OCI-LY7 (cell line): ENCODE measurements at regions of chr3 and their contacts with region 1.

Region 1: GRCh38 chr3:122415720-122416654 is at the start of gene WDR5B:
- DNase-seq: peak; percentile 98
- H3K4me3 ChIP-seq: peak within 1 kb of the TSS; percentile 85
- H3K27ac ChIP-seq: peak within 1 kb of the TSS; percentile 87
- H3K4me1 ChIP-seq: peaks cover 38% of the 10 kb centered on the region
- CTCF ChIP-seq: 0 out of 2 replicates have a peak, but pooled peaks have one; percentile 13
- total RNA-seq, gene WDR5B: 6.9 and 8.3 TPM in 2 replicates

Region 2: GRCh38 chr3:122514123-122515019 is 98.4 kb after region 1 on chr3 and contains the start of gene KPNA1:
- CTCF ChIA-PET with region 1: no interaction called
- POLR2A ChIA-PET with region 1: interaction called, 7 read pairs
- intact Hi-C with region 1: loop called (anchors 5 kb)
- DNase-seq: peak; percentile 93
- H3K4me3 ChIP-seq: peak within 1 kb of the TSS; percentile 75
- H3K27ac ChIP-seq: peak within 1 kb of the TSS; percentile 74
- H3K4me1 ChIP-seq: peaks cover 25% of the 10 kb centered on the region
- CTCF ChIP-seq: no peak
- total RNA-seq, gene KPNA1: 20.0 and 24.6 TPM in 2 replicates

Region 3: GRCh38 chr3:122793568-122794416 is 377.8 kb after region 1 on chr3 and contains the start of gene HSPBAP1:
- CTCF ChIA-PET with region 1: no interaction called
- POLR2A ChIA-PET with region 1: interaction called, 5 read pairs
- intact Hi-C with region 1: loop called (anchors 10 kb)
- DNase-seq: peak; percentile 95
- H3K4me3 ChIP-seq: peak within 1 kb of the TSS; percentile 85
- H3K27ac ChIP-seq: peak within 1 kb of the TSS; percentile 66
- H3K4me1 ChIP-seq: peaks cover 30% of the 10 kb centered on the region
- CTCF ChIP-seq: no peak
- total RNA-seq, gene HSPBAP1: 8.8 and 11.9 TPM in 2 replicates